Activated CD4-positive, alpha-beta memory T cell treated with anti-CD3 and anti-CD28 coated beads, Interleukin-2, amount 10 ng/mL, durations not matched to agents 7 days and 5 days (primary cell): ENCODE measurements at regions of chr22 and their contacts with region 1.

Region 1: GRCh38 chr22:31970490-31971444 is 26.4 kb downstream of the YWHAH start:
- DNase-seq: peak; percentile 92
- H3K4me3 Mint-ChIP-seq: peak overlapping the region; percentile 63
- H3K27ac Mint-ChIP-seq: no peak overlapping the region
- H3K4me1 Mint-ChIP-seq: peaks cover 18% of the 10 kb centered on the region
- H3K27me3 Mint-ChIP-seq: peaks cover 9% of the 10 kb centered on the region

Region 2: DNA sequence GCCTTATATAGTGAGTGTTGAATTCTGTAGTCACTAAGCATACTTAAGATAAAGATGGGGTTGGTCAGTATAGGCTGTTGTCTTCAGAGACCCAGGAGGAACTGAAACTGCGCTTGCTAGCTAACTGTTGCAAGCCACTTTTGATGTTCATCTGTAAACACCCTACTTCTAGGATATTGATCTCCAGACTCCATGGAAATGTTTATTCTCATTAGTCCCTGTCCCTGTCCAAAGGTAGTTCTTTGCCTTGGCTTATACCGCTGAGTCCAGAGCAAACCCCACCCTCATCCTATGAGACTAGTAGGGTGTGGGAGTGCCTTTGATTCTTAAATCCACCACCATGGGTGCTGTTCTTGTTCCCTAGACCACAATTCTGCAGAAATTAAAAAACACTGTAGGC is 180.5 kb before region 1 on chr22:
- CTCF ChIA-PET with region 1: interaction called, 10 read pairs
- POLR2A ChIA-PET with region 1: no interaction called
- DNase-seq: no peak
- H3K4me3 Mint-ChIP-seq: no peak overlapping the region
- H3K27ac Mint-ChIP-seq: no peak overlapping the region
- H3K4me1 Mint-ChIP-seq: peaks cover 5% of the 10 kb centered on the region
- H3K27me3 Mint-ChIP-seq: no peaks in the 10 kb centered on the region

Region 3: GRCh38 chr22:31943976-31944699 is 26.6 kb before region 1 on chr22 and contains the start of gene YWHAH:
- CTCF ChIA-PET with region 1: interaction called, 27 read pairs
- POLR2A ChIA-PET with region 1: no interaction called
- DNase-seq: peak; percentile 93
- H3K4me3 Mint-ChIP-seq: no peak within 1 kb of the TSS
- H3K27ac Mint-ChIP-seq: peak within 1 kb of the TSS; percentile 91
- H3K4me1 Mint-ChIP-seq: peaks cover 31% of the 10 kb centered on the region
- H3K27me3 Mint-ChIP-seq: no peaks in the 10 kb centered on the region
- total RNA-seq, gene YWHAH: 203 to 211 TPM

Region 4: DNA sequence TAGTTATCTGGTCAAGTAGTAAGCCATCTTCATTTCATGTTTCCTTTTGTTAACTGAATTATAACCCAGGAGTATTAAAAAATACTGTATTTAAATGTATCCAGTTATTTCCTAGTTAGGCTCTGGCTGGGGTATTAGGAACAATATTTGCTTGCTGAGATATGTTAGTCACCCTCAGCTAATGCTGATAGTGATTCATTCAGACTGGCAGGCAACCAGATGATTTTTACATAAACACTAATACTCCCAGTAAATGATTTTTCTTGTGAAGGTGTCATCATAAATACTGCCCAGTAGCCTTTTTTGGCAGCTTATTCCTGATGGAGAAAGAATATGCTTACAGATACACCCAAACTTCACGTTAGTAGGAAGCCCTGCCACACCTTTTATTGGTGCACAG is 18.3 kb before region 1 on chr22:
- CTCF ChIA-PET with region 1: interaction called, 27 read pairs
- POLR2A ChIA-PET with region 1: interaction called, 5 read pairs
- DNase-seq: no peak
- H3K4me3 Mint-ChIP-seq: no peak overlapping the region
- H3K27ac Mint-ChIP-seq: peak overlapping the region; percentile 55
- H3K4me1 Mint-ChIP-seq: peaks cover 82% of the 10 kb centered on the region
- H3K27me3 Mint-ChIP-seq: no peaks in the 10 kb centered on the region

Region 5: GRCh38 chr22:31958625-31959239 is 12.0 kb before region 1 on chr22:
- CTCF ChIA-PET with region 1: interaction called, 24 read pairs
- POLR2A ChIA-PET with region 1: interaction called, 5 read pairs
- DNase-seq: peak; percentile 36
- H3K4me3 Mint-ChIP-seq: no peak overlapping the region
- H3K27ac Mint-ChIP-seq: peak overlapping the region; percentile 79
- H3K4me1 Mint-ChIP-seq: peaks cover 46% of the 10 kb centered on the region
- H3K27me3 Mint-ChIP-seq: no peaks in the 10 kb centered on the region

Region 6: DNA sequence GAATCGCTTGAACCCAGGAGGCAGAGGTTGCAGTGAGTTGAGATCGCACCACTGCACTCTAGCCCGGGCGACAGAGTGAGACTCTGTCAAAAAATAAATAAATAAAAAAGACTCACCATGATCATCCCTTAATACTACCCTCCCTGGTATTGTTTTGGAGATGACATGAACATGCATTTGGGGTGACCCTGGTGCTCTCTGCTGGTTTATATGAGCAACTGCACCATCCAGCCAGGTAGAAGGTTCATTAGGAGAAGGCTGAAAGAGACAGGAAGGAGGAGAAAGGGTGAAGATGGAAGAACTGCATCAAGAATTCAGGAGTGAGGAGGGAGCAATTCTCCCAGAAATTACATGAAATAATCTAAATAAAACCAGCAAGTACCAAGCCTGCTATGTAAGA is 110.1 kb after region 1 on chr22:
- CTCF ChIA-PET with region 1: interaction called, 14 read pairs
- POLR2A ChIA-PET with region 1: no interaction called
- DNase-seq: peak; percentile 34
- H3K4me3 Mint-ChIP-seq: no peak overlapping the region
- H3K27ac Mint-ChIP-seq: no peak overlapping the region
- H3K4me1 Mint-ChIP-seq: peaks cover 4% of the 10 kb centered on the region
- H3K27me3 Mint-ChIP-seq: peaks cover 24% of the 10 kb centered on the region